CD4-positive, alpha-beta memory T cell (primary cell): ENCODE measurements at regions of chr11 and their contacts with region 1.

Region 1: DNA sequence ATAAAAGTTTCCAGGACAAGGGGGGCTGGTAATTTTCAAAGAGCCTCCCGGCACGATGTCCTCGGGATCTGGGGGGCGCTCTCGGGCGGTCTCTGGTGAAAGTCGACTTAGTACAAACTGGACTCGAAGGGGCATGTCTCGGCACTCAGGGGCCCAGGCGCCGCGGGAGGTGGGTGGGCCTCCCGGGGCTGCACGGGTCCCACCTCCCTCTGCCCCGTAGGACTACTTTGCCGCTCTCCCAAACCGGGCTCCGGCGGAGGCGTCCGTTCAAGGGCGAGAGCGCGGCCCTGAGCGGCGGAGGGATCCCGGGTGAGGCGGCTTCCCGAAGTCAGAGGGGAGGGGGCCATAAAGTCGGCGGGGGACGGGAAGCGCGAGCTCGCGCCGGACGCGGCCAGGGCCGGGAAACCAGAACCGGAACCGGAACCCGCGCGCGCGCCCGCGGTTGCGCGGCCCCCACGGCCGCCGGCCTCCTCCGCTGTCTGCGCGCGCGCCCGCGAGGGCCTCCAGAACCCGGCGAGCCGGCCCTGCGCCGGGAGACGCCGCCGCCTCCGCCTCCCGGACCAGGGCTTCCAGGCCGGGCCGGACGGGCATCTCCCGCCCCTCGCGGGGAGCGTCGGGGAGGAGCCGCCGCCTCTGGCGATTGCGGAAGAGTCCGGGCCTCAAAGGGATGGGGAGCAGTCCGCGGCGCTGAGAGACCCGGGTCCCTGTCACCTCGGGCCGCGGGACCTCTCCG is at the start of gene ARHGEF12:
- DNase-seq: peak; percentile 48 to 69 (median 62)
- H3K4me3 ChIP-seq: peak within 1 kb of the TSS; percentile 44 to 54
- H3K4me3 Mint-ChIP-seq: peak within 1 kb of the TSS; percentile 87 to 92 (median 90)
- H3K27ac ChIP-seq: no peak within 1 kb of the TSS
- H3K27ac Mint-ChIP-seq: peak within 1 kb of the TSS in 6 of 7 donors; percentile 23 to 86 (median 76)
- H3K4me1 ChIP-seq: peaks cover 33% of the 10 kb centered on the region
- H3K4me1 Mint-ChIP-seq: peaks cover 22 to 39% (median 30%) of the 10 kb centered on the region in 4 donors
- H3K27me3 ChIP-seq: peaks cover 13% of the 10 kb centered on the region
- H3K27me3 Mint-ChIP-seq: peaks cover 33 to 39% of the 10 kb centered on the region in 2 donors
- total RNA-seq, gene ARHGEF12: 4.6 to 5.0 TPM

Region 2: DNA sequence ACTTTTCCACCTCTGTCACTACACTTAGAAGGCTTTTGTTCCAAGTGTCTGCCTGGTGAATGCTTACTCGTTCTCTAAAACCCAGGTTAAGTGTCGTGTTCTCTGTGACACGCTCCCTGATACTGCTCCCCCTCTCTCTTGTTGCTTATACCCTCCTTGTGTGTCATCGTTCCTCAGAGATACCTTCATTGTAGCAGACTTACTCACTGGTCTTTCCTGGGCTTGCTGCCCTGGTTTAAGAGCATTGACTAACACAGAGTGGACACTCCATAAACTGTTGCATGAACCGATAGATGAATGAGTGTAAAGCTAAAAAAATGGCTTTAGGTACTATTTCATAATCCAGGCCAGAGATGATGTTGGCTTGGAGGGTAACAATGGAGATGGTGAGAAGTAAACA is 346.8 kb after region 1 on chr11:
- CTCF ChIA-PET with region 1: interaction called, 104 read pairs
- POLR2A ChIA-PET with region 1: interaction called, 5 read pairs
- intact Hi-C with region 1: loop called (anchors 1 kb)
- DNase-seq: no peak
- H3K4me3 ChIP-seq: no peak overlapping the region
- H3K4me3 Mint-ChIP-seq: no peak overlapping the region
- H3K27ac ChIP-seq: no peak overlapping the region
- H3K27ac Mint-ChIP-seq: no peak overlapping the region
- H3K4me1 ChIP-seq: no peaks in the 10 kb centered on the region
- H3K4me1 Mint-ChIP-seq: no peaks in the 10 kb centered on the region
- H3K27me3 ChIP-seq: no peaks in the 10 kb centered on the region
- H3K27me3 Mint-ChIP-seq: peaks cover 9 to 20% of the 10 kb centered on the region in 2 donors